Posterior cingulate gyrus (tissue), 11 donors: ENCODE measurements at regions of chr7 and their contacts with region 1.

Region 1: GRCh38 chr7:35718047-35718446 is 23.1 kb upstream of the HERPUD2 start:
- DNase-seq: no peak

Region 2: GRCh38 chr7:35792873-35793489 is 74.9 kb after region 1 on chr7:
- intact Hi-C with region 1: loop called (anchors 2 kb)
- DNase-seq: no peak

Region 3: GRCh38 chr7:35906191-35906908 is 188.3 kb after region 1 on chr7:
- intact Hi-C with region 1: no loop called
- DNase-seq: peak in 5 of 10 donors; percentile 51 to 90 (median 64)

Region 4: DNA sequence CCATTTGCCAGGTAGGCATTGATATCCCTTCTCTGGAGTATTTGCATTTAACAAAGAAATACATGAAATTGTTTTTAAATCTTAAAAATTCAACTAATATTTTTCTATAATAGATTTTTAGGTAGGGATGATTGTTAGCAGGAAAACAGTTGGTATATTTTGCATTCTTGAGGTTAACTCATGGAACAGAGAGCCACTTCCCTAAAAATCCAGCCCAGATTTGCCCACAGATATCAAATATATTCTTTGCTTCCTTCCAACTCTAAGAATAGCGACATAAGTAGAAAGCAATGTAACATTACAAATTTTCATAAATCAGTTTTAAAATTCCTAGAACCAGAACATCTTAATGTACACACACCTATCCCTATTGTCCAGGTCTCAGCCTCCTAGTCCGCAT is 626.6 kb after region 1 on chr7:
- intact Hi-C with region 1: no loop called
- DNase-seq: no peak